ENCODE measurements at regions of chr15 and their contacts with region 1.

Region 1: DNA sequence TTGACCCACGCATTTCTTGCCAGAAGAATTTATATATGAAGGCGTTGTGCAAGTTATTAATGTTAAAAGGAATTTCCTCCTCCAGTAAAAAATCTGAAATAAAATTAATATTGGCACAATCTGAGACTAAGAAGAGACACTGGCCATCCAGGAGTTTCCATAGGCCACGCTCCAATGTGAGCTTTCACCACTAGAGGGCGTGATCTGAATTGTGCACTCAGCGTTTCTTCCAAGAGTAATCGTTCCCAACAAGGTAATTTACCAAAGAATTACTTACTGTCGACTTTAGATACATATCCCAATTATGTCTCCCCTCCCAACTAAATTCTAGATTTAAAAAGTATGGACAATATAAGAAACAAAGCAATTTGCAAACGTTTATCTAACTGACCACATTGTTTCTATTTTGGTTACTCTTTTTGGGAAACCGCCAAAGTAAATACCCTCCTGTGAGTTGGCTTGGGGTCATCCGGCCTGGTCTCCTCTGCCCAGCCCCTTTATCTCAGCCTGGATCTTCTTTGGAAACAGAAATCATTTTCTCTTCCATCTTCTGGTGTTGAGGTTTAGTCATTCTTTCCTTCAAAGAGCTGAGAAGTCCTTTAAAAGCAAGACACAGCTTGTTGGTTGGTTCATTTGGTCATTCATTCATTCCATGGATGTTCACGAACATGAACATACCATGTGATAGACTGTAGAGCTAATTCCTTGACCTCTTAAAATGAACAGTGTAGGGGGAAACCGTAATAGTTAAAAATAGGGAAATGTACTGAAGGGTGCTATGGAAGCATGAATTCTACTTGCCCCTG is 26.2 kb downstream of the POLR2M start:
- DNase-seq: peak; percentile 45
- H3K4me3 ChIP-seq: no peak overlapping the region
- H3K27ac ChIP-seq: no peak overlapping the region
- H3K4me1 ChIP-seq: peaks cover 21% of the 10 kb centered on the region
- H3K27me3 ChIP-seq: no peaks in the 10 kb centered on the region
- CTCF ChIP-seq: peak; percentile 86 to 96

Region 2: DNA sequence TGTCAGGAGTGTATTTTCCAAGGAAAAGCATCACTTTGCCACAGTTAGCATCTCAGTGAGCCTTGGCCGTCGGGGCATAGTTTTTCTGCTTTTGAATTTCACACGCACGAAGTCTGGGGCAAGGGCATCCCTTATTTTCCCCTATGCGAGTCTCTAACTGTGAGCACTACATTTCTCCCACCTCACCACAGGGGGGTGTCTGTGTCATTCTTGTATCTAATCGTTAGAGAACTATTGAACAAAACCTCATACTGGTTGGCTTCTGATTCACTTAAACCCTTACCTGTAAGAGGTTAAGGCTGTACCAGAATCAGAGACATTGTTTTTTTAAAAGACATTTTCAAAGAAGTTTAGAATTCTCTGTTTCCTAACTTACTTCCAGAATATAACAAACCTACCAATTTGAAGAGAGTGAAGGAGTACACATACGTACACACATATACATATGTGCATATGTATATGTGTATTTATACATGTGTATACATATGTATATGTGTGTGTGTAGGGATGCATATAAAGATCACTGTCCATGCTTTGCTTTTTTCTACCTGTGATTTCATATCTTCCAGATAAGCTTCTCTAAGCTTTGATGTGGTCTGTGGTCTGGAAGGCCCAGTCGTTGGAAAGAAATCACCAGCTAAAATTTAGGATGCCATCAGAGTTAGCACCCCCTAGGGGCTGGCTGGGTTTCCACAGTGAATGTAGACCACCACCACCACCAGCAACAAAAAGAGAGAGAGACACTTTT is 91.6 kb before region 1 on chr15:
- CTCF ChIA-PET with region 1: no interaction called
- dilution Hi-C with region 1: no loop called
- in situ Hi-C with region 1: no loop called
- intact Hi-C with region 1: loop called (anchors 5 kb)
- DNase-seq: peak; percentile 30
- H3K4me3 ChIP-seq: no peak overlapping the region
- H3K27ac ChIP-seq: no peak overlapping the region
- H3K4me1 ChIP-seq: no peaks in the 10 kb centered on the region
- H3K27me3 ChIP-seq: no peaks in the 10 kb centered on the region
- CTCF ChIP-seq: peak; percentile 41 to 60

Region 3: DNA sequence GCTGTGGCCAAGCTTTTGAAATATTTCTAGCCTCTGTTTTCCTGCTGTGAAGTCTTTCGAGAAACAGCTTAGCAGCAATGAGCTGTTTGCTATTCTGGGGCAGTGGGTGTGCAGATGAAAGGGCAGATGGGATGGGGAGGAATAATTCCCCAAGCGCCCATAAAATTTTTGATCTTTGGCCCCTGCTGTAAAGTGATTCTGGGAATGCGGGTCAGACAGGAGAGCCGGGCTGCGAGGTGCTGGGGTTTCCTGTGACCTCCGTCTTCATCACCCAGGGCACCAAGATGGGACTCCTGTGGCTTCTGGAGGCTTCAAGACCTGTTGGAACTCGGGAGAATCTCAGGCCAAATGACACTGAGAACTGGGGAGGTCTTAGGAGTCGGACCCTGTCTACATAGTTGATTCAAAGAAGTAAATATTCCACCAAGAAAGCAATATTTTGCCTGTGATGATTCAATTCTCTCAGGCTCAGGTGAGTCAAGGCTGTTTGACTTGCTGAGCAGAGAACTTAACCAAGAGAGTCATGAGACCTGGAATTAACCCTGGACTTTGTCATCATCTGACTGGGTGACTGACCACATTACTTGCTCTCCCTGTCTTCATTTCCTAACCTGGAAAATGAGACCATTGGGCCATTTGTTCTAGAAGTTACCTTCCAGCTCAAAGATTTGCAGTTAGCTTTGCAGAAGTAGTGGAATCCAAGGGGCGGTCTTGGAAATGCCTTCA is 60.2 kb after region 1 on chr15:
- CTCF ChIA-PET with region 1: no interaction called
- dilution Hi-C with region 1: no loop called
- in situ Hi-C with region 1: no loop called
- intact Hi-C with region 1: no loop called
- DNase-seq: peak; percentile 80
- H3K4me3 ChIP-seq: no peak overlapping the region
- H3K27ac ChIP-seq: no peak overlapping the region
- H3K4me1 ChIP-seq: no peaks in the 10 kb centered on the region
- H3K27me3 ChIP-seq: no peaks in the 10 kb centered on the region
- CTCF ChIP-seq: no peak

Measured in mammary epithelial cell (primary cell).